H1 (cell line): ENCODE measurements at regions of chr4 and their contacts with region 1.

Region 1: GRCh38 chr4:47122592-47123291 is 91.4 kb downstream of the GABRB1 start:
- DNase-seq: peak; percentile 51 to 75
- H3K4me3 ChIP-seq: no peak overlapping the region
- H3K27ac ChIP-seq: no peak overlapping the region
- H3K4me1 ChIP-seq: no peaks in the 10 kb centered on the region
- H3K27me3 ChIP-seq: no peaks in the 10 kb centered on the region
- CTCF ChIP-seq: peak in 2 of 3 experiments; percentile 71 to 90; a peak in 3 of 4 replicates
- EP300 ChIP-seq: no peak
- POLR2A ChIP-seq: no peak
- RAD21 ChIP-seq: peak; percentile 75 to 84

Region 2: GRCh38 chr4:47109379-47109778 is 13.4 kb before region 1 on chr4:
- CTCF ChIA-PET with region 1: interaction called, 16 read pairs
- POLR2A ChIA-PET with region 1: no interaction called
- DNase-seq: no peak
- H3K4me3 ChIP-seq: no peak overlapping the region
- H3K27ac ChIP-seq: no peak overlapping the region
- H3K4me1 ChIP-seq: no peaks in the 10 kb centered on the region
- H3K27me3 ChIP-seq: no peaks in the 10 kb centered on the region
- CTCF ChIP-seq: peak in 1 of 3 experiments; percentile 29; a peak in 2 of 4 replicates
- EP300 ChIP-seq: no peak
- POLR2A ChIP-seq: no peak
- RAD21 ChIP-seq: peak; percentile 33 to 54; a peak in 3 of 4 replicates

Region 3: DNA sequence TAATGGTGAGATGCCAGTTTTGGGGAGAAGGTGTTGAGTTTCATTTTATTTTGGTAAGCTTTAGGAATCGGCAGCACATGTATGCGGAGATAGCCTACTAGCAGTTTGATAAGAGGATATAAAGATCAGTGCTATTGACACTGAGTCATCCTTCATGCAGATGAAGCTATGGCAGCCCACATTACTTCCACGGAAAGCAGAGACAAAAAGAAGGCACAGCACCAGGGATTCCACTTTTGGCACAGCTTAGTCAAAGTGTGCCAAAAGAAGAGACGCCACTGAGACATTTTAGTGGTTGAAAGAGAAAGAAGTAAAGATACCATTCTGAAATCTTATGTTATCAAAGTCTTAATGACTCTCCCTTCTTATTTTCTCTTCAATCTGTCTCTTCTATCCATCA is 12.5 kb after region 1 on chr4:
- CTCF ChIA-PET with region 1: interaction called, 12 read pairs
- POLR2A ChIA-PET with region 1: no interaction called
- DNase-seq: no peak
- H3K4me3 ChIP-seq: no peak overlapping the region
- H3K27ac ChIP-seq: no peak overlapping the region
- H3K4me1 ChIP-seq: no peaks in the 10 kb centered on the region
- H3K27me3 ChIP-seq: no peaks in the 10 kb centered on the region
- CTCF ChIP-seq: no peak
- EP300 ChIP-seq: no peak
- POLR2A ChIP-seq: no peak
- RAD21 ChIP-seq: no peak

Region 4: DNA sequence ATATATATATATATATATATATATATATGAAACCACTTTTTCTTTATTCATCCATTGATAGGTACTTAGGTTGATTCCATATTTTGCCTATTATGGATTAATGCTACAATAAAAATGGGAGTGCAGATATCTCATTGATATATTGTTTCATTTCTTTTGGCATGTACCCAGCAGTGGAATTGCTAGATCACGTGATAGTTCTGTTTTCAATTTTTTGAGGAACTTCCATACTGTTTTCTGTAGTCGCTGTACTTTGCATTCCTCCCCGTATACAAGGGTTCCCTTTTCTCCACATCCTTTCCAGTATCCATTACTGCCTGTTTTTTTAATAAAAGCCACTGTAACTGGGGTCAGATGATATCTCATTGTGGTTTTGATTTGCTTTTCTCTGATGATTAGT is 33.2 kb after region 1 on chr4:
- CTCF ChIA-PET with region 1: no interaction called
- POLR2A ChIA-PET with region 1: no interaction called
- DNase-seq: no peak
- H3K4me3 ChIP-seq: no peak overlapping the region
- H3K27ac ChIP-seq: no peak overlapping the region
- H3K4me1 ChIP-seq: peaks cover 0 to 3% (median 0%) of the 10 kb centered on the region in 4 experiments; a peak in 1 of 7 replicates
- H3K27me3 ChIP-seq: no peaks in the 10 kb centered on the region
- CTCF ChIP-seq: no peak
- EP300 ChIP-seq: no peak
- POLR2A ChIP-seq: no peak
- RAD21 ChIP-seq: no peak

Region 5: GRCh38 chr4:47194036-47194737 is 71.4 kb after region 1 on chr4:
- CTCF ChIA-PET with region 1: no interaction called
- POLR2A ChIA-PET with region 1: no interaction called
- DNase-seq: no peak
- H3K4me3 ChIP-seq: no peak overlapping the region
- H3K27ac ChIP-seq: no peak overlapping the region
- H3K4me1 ChIP-seq: no peaks in the 10 kb centered on the region
- H3K27me3 ChIP-seq: no peaks in the 10 kb centered on the region
- CTCF ChIP-seq: no peak
- EP300 ChIP-seq: no peak
- POLR2A ChIP-seq: no peak
- RAD21 ChIP-seq: no peak

Region 6: DNA sequence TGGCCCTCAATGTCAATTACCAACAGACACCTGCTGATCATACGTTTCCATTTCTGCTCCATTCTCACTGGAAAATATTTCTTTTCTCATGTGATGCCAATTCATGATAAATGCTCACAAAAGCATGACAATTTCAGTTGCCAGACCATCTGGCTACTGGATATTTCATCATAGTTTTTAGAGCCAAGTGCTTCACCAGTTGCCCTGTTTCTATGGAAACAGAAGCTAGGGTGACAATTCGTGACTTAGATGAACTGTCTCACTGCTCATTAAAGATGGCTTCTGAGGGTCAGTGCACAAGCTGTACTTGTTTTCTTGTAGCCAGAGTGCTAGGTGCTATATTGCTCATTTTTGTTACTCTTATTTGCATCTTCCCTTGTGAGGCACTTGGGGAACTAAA is 155.9 kb after region 1 on chr4:
- CTCF ChIA-PET with region 1: no interaction called
- POLR2A ChIA-PET with region 1: no interaction called
- DNase-seq: no peak
- H3K4me3 ChIP-seq: no peak overlapping the region
- H3K27ac ChIP-seq: no peak overlapping the region
- H3K4me1 ChIP-seq: no peaks in the 10 kb centered on the region
- H3K27me3 ChIP-seq: peaks cover 0 to 2% (median 0%) of the 10 kb centered on the region in 4 experiments; a peak in 2 of 7 replicates
- CTCF ChIP-seq: no peak
- EP300 ChIP-seq: no peak
- POLR2A ChIP-seq: no peak
- RAD21 ChIP-seq: no peak